Caco-2 (cell line): ENCODE measurements at regions of chr6 and their contacts with region 1.

Region 1: DNA sequence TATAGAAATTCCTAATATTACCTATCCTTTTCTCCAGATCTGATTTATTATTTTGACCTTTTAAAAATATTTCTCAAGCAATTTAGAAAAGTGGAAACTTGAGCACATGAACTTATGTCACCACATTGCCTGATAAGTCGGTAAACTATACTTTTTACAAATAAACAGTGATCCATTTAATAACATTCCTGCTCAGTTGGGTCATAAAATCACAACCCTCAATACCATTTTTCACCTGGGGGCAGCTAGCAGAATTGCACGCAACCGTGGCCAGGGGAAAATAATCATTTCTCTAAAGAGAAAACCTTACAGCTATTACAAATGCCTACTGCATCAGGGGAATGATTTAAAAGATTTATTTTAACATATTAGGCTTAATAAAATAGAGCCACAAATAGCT is 614.5 kb downstream of the PHF3 start:
- DNase-seq: no peak
- H3K4me3 ChIP-seq: no peak overlapping the region
- H3K4me3 Mint-ChIP-seq: no peak overlapping the region
- H3K27ac Mint-ChIP-seq: no peak overlapping the region
- H3K4me1 ChIP-seq: peaks cover 27% of the 10 kb centered on the region
- H3K4me1 Mint-ChIP-seq: peaks cover 37% of the 10 kb centered on the region
- H3K27me3 ChIP-seq: no peaks in the 10 kb centered on the region
- H3K27me3 Mint-ChIP-seq: no peaks in the 10 kb centered on the region
- CTCF ChIP-seq: no peak

Region 2: DNA sequence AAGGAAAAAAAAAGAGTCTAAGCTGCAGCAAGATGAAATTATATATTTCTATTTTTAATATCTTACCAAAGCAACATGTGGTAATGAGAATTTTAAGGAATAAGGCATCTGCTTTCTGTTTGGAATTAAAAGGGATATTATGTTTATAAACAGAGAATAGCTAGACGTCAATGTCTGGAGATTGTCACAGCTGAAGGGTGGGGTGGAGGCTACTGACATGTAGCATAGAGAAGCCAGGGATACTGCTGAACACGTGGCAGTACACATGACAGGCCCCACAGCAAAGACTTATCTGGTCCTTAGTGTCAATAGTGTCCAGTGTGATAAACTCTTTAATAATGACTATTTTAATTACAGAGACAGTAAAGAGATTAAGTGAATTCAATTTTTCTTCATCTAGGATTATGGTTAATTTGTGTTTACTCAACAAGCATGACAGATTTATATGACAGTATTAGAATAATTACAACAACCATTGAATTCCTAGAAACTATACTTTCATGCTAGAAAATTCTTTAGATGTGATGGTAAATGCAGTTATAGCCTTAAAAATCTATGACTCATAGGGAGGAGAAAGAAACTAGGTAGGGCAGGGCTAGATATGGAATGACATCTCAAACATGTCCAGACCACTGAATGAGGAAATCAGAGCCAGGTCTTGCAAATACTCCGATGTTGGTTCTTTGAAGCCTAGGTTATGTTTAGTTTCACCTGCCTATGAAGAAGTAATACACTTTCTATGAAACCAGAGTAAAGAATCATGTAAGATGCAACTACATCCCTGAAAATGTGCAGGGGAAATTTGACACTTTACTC is 215.1 kb before region 1 on chr6:
- CTCF ChIA-PET with region 1: no interaction called
- POLR2A ChIA-PET with region 1: no interaction called
- intact Hi-C with region 1: loop called (anchors 5 kb)
- DNase-seq: peak in 1 of 2 experiments; percentile 31
- H3K4me3 ChIP-seq: no peak overlapping the region
- H3K4me3 Mint-ChIP-seq: no peak overlapping the region
- H3K27ac Mint-ChIP-seq: peak overlapping the region; percentile 42
- H3K4me1 ChIP-seq: peaks cover 16% of the 10 kb centered on the region
- H3K4me1 Mint-ChIP-seq: peaks cover 23% of the 10 kb centered on the region
- H3K27me3 ChIP-seq: no peaks in the 10 kb centered on the region
- H3K27me3 Mint-ChIP-seq: no peaks in the 10 kb centered on the region
- CTCF ChIP-seq: no peak

Region 3: DNA sequence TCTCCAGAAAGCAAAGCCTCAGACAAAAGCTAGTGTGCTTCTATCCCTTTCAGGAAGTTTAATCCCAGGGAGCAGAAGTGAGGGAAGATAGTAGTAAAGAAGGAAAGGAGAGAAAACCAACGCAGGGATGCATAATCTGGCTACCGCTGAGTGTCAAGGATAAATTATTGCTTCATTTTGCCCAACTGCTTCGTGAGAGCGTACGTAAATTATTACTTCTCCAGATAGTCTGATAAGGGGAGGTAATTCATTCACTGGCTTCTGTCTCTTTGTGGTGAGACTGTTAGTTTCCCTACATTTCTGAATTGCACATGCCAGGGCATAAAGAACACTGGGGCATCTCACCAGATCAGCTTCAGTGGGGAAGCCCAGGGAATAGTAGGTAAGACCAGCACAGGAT is 74.8 kb before region 1 on chr6:
- CTCF ChIA-PET with region 1: no interaction called
- POLR2A ChIA-PET with region 1: no interaction called
- intact Hi-C with region 1: no loop called
- DNase-seq: no peak
- H3K4me3 ChIP-seq: no peak overlapping the region
- H3K4me3 Mint-ChIP-seq: no peak overlapping the region
- H3K27ac Mint-ChIP-seq: no peak overlapping the region
- H3K4me1 ChIP-seq: no peaks in the 10 kb centered on the region
- H3K4me1 Mint-ChIP-seq: no peaks in the 10 kb centered on the region
- H3K27me3 ChIP-seq: no peaks in the 10 kb centered on the region
- H3K27me3 Mint-ChIP-seq: no peaks in the 10 kb centered on the region
- CTCF ChIP-seq: no peak

Region 4: GRCh38 chr6:64301307-64302236 is 51.4 kb after region 1 on chr6:
- CTCF ChIA-PET with region 1: no interaction called
- POLR2A ChIA-PET with region 1: no interaction called
- intact Hi-C with region 1: loop called (anchors 2 kb)
- DNase-seq: peak; percentile 66 to 70
- H3K4me3 ChIP-seq: no peak overlapping the region
- H3K4me3 Mint-ChIP-seq: peak overlapping the region; percentile 27
- H3K27ac Mint-ChIP-seq: peak overlapping the region; percentile 50
- H3K4me1 ChIP-seq: peaks cover 21% of the 10 kb centered on the region
- H3K4me1 Mint-ChIP-seq: peaks cover 13% of the 10 kb centered on the region
- H3K27me3 ChIP-seq: no peaks in the 10 kb centered on the region
- H3K27me3 Mint-ChIP-seq: no peaks in the 10 kb centered on the region
- CTCF ChIP-seq: no peak